ENCODE measurements at regions of chr7 and their contacts with region 1.

Region 1: GRCh38 chr7:82810558-82811259 is 352.0 kb downstream of the PCLO start:
- DNase-seq: no peak
- H3K4me3 ChIP-seq: no peak overlapping the region
- H3K27ac ChIP-seq: no peak overlapping the region
- H3K4me1 ChIP-seq: no peaks in the 10 kb centered on the region
- H3K27me3 ChIP-seq: no peaks in the 10 kb centered on the region
- CTCF ChIP-seq: peak; percentile 69

Region 2: DNA sequence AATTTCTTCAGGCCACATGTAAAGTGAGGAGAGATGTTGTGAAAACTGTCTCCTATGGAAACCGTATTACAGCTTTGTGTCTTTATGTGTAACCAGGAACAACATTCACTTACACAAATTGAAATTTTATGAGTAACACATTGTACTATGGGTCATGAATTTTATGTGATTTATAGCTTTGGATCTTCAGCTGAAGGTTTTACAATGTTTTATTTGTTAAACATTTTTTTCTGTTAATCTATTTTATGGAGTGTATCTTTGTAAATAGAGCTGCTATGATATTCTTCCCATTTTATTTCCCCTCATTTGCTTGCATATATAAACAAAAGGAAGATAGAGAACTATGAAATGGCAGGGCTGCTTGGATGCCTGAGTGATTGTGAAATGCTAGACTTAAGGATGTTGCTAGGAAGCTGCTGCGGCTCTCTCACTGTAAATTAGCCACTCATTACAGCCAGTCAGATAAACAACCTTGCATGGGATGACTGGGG is 456.5 kb after region 1 on chr7:
- intact Hi-C with region 1: loop called (anchors 10 kb)
- DNase-seq: no peak
- H3K4me3 ChIP-seq: no peak overlapping the region
- H3K27ac ChIP-seq: no peak overlapping the region
- H3K4me1 ChIP-seq: no peaks in the 10 kb centered on the region
- H3K27me3 ChIP-seq: no peaks in the 10 kb centered on the region
- CTCF ChIP-seq: no peak

Measured in left ventricle myocardium inferior (tissue), 1 donor.